PC-3 (cell line): ENCODE measurements at regions of chr14 and their contacts with region 1.

Region 1: GRCh38 chr14:24058260-24058950 is 6.6 kb downstream of the CARMIL3 start:
- DNase-seq: peak; percentile 84
- ATAC-seq: peak; percentile 94
- H3K4me3 ChIP-seq: no peak overlapping the region
- H3K27ac ChIP-seq: no peak overlapping the region
- H3K4me1 ChIP-seq: no peaks in the 10 kb centered on the region
- H3K27me3 ChIP-seq: 0 out of 2 replicates have a peak, but pooled peaks cover 6% of the 10 kb centered on the region
- CTCF ChIP-seq: peak; percentile 84

Region 2: DNA sequence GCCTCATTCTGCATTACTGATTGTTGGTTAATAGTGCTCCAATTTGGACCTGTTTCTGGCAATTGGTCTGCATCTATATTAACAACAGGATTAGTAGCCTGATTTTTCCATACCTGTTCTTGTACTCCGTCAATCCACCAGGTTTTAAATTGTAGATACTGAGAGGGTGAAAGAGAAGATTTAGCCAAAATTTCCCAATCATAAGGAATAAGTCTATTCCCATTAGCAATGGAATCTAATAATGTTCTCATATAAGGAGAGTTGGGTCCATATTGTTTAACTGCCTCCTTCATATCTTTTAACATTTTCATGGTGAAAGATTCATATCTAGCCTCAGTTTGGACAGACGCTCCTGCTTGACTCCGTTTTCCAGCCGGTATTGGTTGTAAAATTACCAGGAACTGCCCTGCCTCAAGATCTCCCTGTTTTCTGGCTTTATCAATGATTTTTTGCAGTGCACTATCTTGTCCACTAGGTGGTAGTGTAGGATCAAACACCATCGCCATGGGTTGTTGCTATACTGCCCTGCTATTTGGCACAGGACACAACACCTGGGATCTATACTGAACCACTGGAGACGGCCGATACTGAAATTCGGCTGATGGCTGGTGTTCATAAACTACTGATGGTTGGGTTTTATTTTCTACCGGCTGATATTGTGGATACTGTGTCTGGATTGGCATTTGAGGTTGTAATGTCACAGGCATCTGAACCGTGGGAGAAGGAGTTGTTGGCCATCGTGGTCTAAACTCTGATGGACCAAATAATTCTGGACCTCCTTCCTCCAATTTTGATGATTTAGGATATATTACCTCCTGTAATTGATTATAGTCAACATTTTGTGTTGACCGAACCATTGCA is 44.5 kb before region 1 on chr14:
- CTCF ChIA-PET with region 1: no interaction called
- POLR2A ChIA-PET with region 1: no interaction called
- intact Hi-C with region 1: loop called (anchors 5 kb)
- DNase-seq: peak; percentile 89
- ATAC-seq: peak; percentile 95
- H3K4me3 ChIP-seq: no peak overlapping the region
- H3K27ac ChIP-seq: no peak overlapping the region
- H3K4me1 ChIP-seq: no peaks in the 10 kb centered on the region
- H3K27me3 ChIP-seq: no peaks in the 10 kb centered on the region
- CTCF ChIP-seq: peak; percentile 83

Region 3: GRCh38 chr14:24108336-24108874 is 50.0 kb after region 1 on chr14:
- CTCF ChIA-PET with region 1: interaction called, 40 read pairs
- POLR2A ChIA-PET with region 1: no interaction called
- intact Hi-C with region 1: loop called (anchors 1 kb)
- DNase-seq: no peak
- ATAC-seq: no peak; the same call in 1 of the 2 replicates
- H3K4me3 ChIP-seq: no peak overlapping the region
- H3K27ac ChIP-seq: no peak overlapping the region
- H3K4me1 ChIP-seq: peaks cover 9% of the 10 kb centered on the region
- H3K27me3 ChIP-seq: no peaks in the 10 kb centered on the region
- CTCF ChIP-seq: no peak

Region 4: DNA sequence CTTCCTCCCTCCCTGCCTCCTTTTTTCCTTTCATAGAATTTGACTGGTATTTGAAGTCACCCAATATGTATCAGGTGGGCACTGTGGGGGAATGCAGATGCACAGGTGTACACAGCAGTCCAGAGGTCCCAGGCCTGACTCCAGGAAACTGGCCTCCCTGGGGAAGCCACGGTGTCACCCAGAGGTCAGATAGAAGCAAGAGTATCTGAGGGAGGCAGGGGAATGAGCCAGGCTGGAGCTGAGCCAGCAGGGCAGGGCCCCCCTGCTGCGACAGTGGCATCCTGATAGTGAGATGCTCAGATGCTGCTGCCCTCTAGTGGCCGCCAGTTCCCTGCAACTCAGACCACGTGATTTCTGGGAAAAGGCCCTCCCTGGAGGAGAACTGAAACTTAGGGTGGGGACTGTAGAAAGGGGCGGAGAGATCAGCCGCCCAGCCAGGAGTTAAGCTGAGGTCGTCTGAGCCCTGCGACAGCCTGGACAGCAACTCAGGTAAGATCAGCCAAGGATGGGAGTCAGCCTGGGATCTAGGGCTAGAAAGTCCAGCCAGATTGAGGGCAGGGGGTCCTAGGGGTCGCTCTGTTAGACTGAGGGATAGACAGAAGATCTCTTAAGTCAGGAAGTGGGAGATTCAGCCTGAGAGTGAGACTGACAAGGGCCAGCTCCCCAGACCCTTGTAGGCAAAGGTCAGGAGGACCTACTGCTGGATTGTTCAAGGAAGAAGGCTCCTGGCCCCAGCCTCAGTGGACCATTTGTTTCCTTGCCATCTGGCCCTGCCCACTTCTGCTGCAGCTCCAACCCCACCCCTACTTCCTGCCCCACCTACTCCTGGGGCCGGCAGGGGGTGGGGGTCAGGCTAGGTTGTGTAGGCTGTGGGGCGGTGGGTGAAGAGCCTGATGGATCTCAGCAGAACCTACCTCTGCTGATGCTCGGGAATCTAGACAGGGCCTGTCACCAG is 102.7 kb after region 1 on chr14 and contains the start of gene IRF9:
- CTCF ChIA-PET with region 1: interaction called, 7 read pairs
- POLR2A ChIA-PET with region 1: no interaction called
- intact Hi-C with region 1: loop called (anchors 2 kb)
- DNase-seq: peak; percentile 97
- ATAC-seq: peak; percentile 94
- H3K4me3 ChIP-seq: peak within 1 kb of the TSS; percentile 47
- H3K27ac ChIP-seq: peak within 1 kb of the TSS; percentile 11
- H3K4me1 ChIP-seq: peaks cover 13% of the 10 kb centered on the region
- H3K27me3 ChIP-seq: no peaks in the 10 kb centered on the region
- CTCF ChIP-seq: peak; percentile 96
- total RNA-seq, gene IRF9: 10.5 and 20.6 TPM in 2 replicates